ENCODE measurements at regions of chr4 and their contacts with region 1.

Region 1: GRCh38 chr4:110510955-110511544 is 35.1 kb downstream of the ENPEP start:
- DNase-seq: no peak
- H3K4me3 ChIP-seq: no peak overlapping the region
- H3K27ac ChIP-seq: no peak overlapping the region
- H3K4me1 ChIP-seq: no peaks in the 10 kb centered on the region
- H3K27me3 ChIP-seq: no peaks in the 10 kb centered on the region
- CTCF ChIP-seq: peak; percentile 14 to 38 (median 31)
- EP300 ChIP-seq: no peak
- POLR2A ChIP-seq: no peak

Region 2: GRCh38 chr4:110005461-110006056 is 505.5 kb before region 1 on chr4:
- intact Hi-C with region 1: loop called in 1 of 4 experiments (anchors 5 kb)
- DNase-seq: no peak
- H3K4me3 ChIP-seq: no peak overlapping the region
- H3K27ac ChIP-seq: no peak overlapping the region
- H3K4me1 ChIP-seq: no peaks in the 10 kb centered on the region
- H3K27me3 ChIP-seq: no peaks in the 10 kb centered on the region
- CTCF ChIP-seq: peak in 2 of 3 donors; percentile 15 to 31
- EP300 ChIP-seq: no peak
- POLR2A ChIP-seq: no peak

Region 3: GRCh38 chr4:110381784-110382183 is 129.3 kb before region 1 on chr4:
- intact Hi-C with region 1: no loop called
- DNase-seq: no peak
- H3K4me3 ChIP-seq: no peak overlapping the region
- H3K27ac ChIP-seq: no peak overlapping the region
- H3K4me1 ChIP-seq: no peaks in the 10 kb centered on the region
- H3K27me3 ChIP-seq: no peaks in the 10 kb centered on the region
- CTCF ChIP-seq: no peak
- EP300 ChIP-seq: no peak
- POLR2A ChIP-seq: no peak

Region 4: DNA sequence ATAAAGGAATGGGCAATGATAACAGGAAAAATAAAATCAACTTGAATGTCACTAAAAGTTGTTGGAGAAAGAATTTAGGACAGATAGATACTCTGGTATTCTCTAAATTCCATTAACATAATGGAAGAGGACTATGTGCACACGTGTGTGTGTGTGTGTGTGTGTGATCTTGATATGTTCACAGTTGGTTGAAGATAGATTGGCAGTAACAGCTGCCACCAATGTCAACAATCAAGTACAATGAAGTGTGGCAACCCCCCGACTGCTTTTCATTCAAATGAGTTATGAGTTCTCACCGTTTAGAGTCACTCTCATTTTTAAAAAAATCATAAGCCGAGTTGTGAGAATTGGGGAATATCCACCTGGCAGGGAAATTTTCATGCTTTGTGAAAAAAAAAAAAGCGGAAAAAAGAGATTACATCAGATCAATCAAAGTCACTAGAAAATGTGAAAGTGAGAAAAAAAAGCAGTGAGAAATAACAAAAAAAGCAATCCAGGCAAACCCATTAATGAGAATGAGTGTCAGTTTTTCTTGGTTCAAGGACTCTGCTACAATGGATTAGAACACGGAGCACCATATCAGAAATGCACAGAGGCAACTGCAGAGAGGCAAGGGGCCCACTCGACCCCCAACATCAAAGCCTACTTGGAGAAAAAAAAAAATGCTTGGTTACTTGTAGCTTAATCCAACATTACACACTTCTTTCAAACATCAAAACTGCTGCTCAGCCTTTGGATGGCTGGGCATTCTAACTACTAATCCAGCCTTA is 526.7 kb after region 1 on chr4:
- intact Hi-C with region 1: no loop called
- DNase-seq: no peak
- H3K4me3 ChIP-seq: no peak overlapping the region
- H3K27ac ChIP-seq: no peak overlapping the region
- H3K4me1 ChIP-seq: no peaks in the 10 kb centered on the region
- H3K27me3 ChIP-seq: no peaks in the 10 kb centered on the region
- CTCF ChIP-seq: no peak
- EP300 ChIP-seq: no peak
- POLR2A ChIP-seq: no peak

Measured in ovary (tissue), 10 donors.